Activated naive CD4-positive, alpha-beta T cell treated with anti-CD3 and anti-CD28 coated beads for 36 hours (primary cell): ENCODE measurements at regions of chr18 and their contacts with region 1.

Region 1: GRCh38 chr18:2571200-2572143 is at the starts of genes METTL4 and NDC80:
- DNase-seq: peak; percentile 90
- H3K4me3 Mint-ChIP-seq: peak within 1 kb of the TSS; percentile 97
- H3K27ac Mint-ChIP-seq: peak within 1 kb of the TSS; percentile 98
- H3K4me1 Mint-ChIP-seq: peaks cover 49% of the 10 kb centered on the region
- H3K27me3 Mint-ChIP-seq: no peaks in the 10 kb centered on the region
- total RNA-seq, gene METTL4: 19.4 to 20.6 TPM
- total RNA-seq, gene NDC80: 96.8 to 108 TPM

Region 2: GRCh38 chr18:2589345-2590068 is 18.0 kb after region 1 on chr18:
- CTCF ChIA-PET with region 1: interaction called, 4 read pairs
- intact Hi-C with region 1: loop called (anchors 1 kb)
- DNase-seq: no peak
- H3K4me3 Mint-ChIP-seq: peak overlapping the region; percentile 55
- H3K27ac Mint-ChIP-seq: peak overlapping the region; percentile 93
- H3K4me1 Mint-ChIP-seq: peaks cover 59% of the 10 kb centered on the region
- H3K27me3 Mint-ChIP-seq: no peaks in the 10 kb centered on the region

Region 3: DNA sequence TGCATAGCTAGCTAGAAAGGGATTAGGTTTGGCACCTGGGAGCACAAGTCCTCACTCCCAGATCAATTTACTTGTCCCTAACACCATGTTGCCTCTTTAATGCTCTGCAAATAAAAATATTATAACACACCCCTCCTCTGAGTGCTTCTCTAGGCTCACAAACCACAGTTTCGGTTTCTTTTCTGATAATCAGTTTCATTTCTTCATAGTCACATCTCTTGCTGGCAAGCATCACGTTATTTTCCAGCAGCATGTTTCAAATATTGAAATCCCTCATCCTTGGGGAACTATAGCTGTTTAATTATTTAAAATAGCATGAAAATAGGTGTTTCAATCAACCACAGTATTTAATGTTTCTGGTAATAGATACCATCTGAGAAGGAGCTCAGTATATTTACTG is 70.2 kb after region 1 on chr18:
- CTCF ChIA-PET with region 1: no interaction called
- intact Hi-C with region 1: loop called (anchors 1 kb)
- DNase-seq: no peak
- H3K4me3 Mint-ChIP-seq: peak overlapping the region; percentile 23
- H3K27ac Mint-ChIP-seq: peak overlapping the region; percentile 86
- H3K4me1 Mint-ChIP-seq: peaks cover 52% of the 10 kb centered on the region
- H3K27me3 Mint-ChIP-seq: no peaks in the 10 kb centered on the region

Region 4: DNA sequence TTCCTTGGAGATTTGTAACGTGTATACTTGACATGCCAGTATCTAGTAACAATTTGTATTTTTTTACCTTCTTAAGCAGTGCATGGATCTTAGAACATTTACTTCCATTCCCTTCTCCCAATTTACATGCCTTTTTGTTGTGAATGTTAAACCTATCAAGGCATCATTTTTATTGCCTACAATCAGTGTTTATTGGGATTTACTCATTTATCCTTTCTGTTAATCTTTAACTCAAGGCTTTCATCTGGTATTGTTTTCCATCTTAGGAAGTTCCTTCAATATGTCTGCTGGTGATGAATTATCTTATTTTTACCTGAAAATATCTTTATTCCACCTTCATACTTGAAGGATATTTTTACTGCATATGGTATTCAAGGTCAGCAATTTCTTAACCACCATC is 186.8 kb after region 1 on chr18:
- CTCF ChIA-PET with region 1: no interaction called
- intact Hi-C with region 1: loop called (anchors 5 kb)
- DNase-seq: no peak
- H3K4me3 Mint-ChIP-seq: no peak overlapping the region
- H3K27ac Mint-ChIP-seq: no peak overlapping the region
- H3K4me1 Mint-ChIP-seq: peaks cover 16% of the 10 kb centered on the region
- H3K27me3 Mint-ChIP-seq: no peaks in the 10 kb centered on the region

Region 5: DNA sequence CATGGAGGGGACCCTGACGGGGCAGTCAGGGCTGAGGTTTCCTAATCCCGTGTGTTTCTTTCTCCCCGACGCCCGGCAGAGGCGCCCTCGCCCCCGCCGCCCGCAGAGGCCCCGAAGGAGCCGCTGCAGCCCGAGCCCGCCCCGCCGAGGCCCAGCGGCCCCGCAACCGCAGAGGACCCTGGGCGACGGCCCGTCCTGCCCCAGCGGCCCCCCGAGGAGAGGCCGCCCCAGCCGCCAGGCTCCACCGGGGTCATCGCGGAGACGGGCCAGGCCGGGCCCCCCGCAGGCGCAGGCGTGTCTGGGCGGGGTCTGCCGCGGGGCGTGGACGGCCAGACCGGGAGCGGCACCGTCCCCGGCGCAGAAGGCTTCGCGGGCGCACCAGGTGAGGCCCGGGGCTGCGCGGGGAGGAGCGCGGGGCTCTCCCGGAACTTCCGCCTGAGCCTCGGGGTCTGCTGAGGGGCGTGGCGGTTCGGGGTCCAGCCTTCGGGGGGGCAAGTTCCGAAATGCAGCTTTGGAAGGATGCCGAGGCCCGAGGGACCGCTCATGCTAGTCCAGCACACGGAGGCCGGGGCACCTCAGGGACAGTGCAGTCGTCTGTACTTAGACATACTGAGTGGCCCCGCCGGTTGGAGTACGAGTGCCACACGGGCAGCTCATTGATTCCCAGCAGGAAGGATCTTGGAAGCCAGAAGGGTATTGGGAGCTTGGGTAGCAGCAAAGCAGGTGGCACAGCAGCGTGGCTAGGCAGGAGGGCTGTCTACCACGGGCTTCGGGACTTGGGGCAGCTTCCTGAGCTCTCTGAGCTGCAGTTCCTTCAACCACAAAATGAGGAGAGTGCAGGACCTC is 335.5 kb after region 1 on chr18:
- CTCF ChIA-PET with region 1: no interaction called
- intact Hi-C with region 1: loop called (anchors 2 kb)
- DNase-seq: peak; percentile 51
- H3K4me3 Mint-ChIP-seq: peak overlapping the region; percentile 81
- H3K27ac Mint-ChIP-seq: peak overlapping the region; percentile 33
- H3K4me1 Mint-ChIP-seq: peaks cover 12% of the 10 kb centered on the region
- H3K27me3 Mint-ChIP-seq: no peaks in the 10 kb centered on the region

Region 6: GRCh38 chr18:3012964-3013804 is 441.7 kb after region 1 on chr18 and contains the start of gene LPIN2:
- CTCF ChIA-PET with region 1: no interaction called
- intact Hi-C with region 1: loop called (anchors 2 kb)
- DNase-seq: peak; percentile 97
- H3K4me3 Mint-ChIP-seq: peak within 1 kb of the TSS; percentile 84
- H3K27ac Mint-ChIP-seq: peak within 1 kb of the TSS; percentile 92
- H3K4me1 Mint-ChIP-seq: peaks cover 68% of the 10 kb centered on the region
- H3K27me3 Mint-ChIP-seq: no peaks in the 10 kb centered on the region
- total RNA-seq, gene LPIN2: 62.4 to 65.7 TPM

Region 7: GRCh38 chr18:3075491-3075890 is 504.0 kb after region 1 on chr18:
- CTCF ChIA-PET with region 1: no interaction called
- intact Hi-C with region 1: no loop called
- DNase-seq: no peak
- H3K4me3 Mint-ChIP-seq: no peak overlapping the region
- H3K27ac Mint-ChIP-seq: no peak overlapping the region
- H3K4me1 Mint-ChIP-seq: peaks cover 13% of the 10 kb centered on the region
- H3K27me3 Mint-ChIP-seq: no peaks in the 10 kb centered on the region